Activated B cell treated with CpG ODN at 0.5 μM for 24 hours (primary cell): ENCODE measurements at regions of chr3 and their contacts with region 1.

Region 1: GRCh38 chr3:33717866-33718594 is at the start of gene CLASP2:
- DNase-seq: peak; percentile 89
- ATAC-seq: peak; percentile 90
- H3K4me3 Mint-ChIP-seq: peak within 1 kb of the TSS; percentile 96
- H3K27ac Mint-ChIP-seq: peak within 1 kb of the TSS; percentile 98
- H3K4me1 Mint-ChIP-seq: peaks cover 12% of the 10 kb centered on the region
- H3K27me3 Mint-ChIP-seq: no peaks in the 10 kb centered on the region
- CTCF ChIP-seq: no peak
- total RNA-seq, gene CLASP2: 73.3 and 85.8 TPM in 2 replicates

Region 2: GRCh38 chr3:33113772-33114621 is 604.0 kb before region 1 on chr3 and contains the start of gene CRTAP:
- CTCF ChIA-PET with region 1: no interaction called
- POLR2A ChIA-PET with region 1: no interaction called
- intact Hi-C with region 1: loop called (anchors 5 kb)
- DNase-seq: peak; percentile 91
- ATAC-seq: peak; percentile 83
- H3K4me3 Mint-ChIP-seq: peak within 1 kb of the TSS; percentile 87
- H3K27ac Mint-ChIP-seq: peak within 1 kb of the TSS; percentile 85
- H3K4me1 Mint-ChIP-seq: peaks cover 50% of the 10 kb centered on the region
- H3K27me3 Mint-ChIP-seq: no peaks in the 10 kb centered on the region
- CTCF ChIP-seq: no peak
- total RNA-seq, gene CRTAP: 36.5 and 36.6 TPM in 2 replicates

Region 3: DNA sequence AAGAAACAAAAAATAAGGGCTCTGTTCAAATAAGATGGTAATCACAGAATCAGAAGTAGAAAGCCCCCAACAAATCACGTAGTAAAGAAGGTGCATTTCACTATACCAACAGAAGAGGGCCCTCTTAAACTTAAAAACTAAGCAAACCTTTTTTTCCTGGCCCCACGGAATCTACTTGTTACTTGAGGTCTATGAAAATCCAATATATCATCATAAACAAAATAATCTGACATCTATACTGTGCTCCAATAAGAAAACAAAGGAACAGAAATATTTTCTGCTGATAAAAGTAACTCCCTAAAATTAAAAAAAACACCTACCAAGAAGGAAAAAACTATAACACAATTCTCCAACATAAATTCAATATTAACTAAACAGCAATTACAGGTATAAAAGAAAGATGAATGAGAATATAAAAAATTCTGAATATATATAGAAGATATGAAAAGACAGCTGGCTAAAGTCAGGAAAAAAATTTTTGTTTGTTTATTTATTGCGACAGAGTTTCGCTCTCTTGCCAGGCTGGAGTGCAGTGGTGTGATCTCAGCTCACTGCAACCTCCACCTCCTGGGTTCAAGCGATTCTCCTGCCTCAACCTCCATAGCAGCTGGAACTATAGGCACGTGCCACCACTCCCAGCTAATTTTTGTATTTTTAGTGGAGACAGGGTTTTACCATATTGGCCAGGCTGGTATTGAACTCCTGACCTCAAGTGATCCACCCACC is 81.7 kb before region 1 on chr3:
- CTCF ChIA-PET with region 1: no interaction called
- POLR2A ChIA-PET with region 1: no interaction called
- intact Hi-C with region 1: loop called (anchors 2 kb)
- DNase-seq: no peak
- ATAC-seq: no peak
- H3K4me3 Mint-ChIP-seq: no peak overlapping the region
- H3K27ac Mint-ChIP-seq: no peak overlapping the region
- H3K4me1 Mint-ChIP-seq: no peaks in the 10 kb centered on the region
- H3K27me3 Mint-ChIP-seq: no peaks in the 10 kb centered on the region
- CTCF ChIP-seq: peak; percentile 31

Region 4: DNA sequence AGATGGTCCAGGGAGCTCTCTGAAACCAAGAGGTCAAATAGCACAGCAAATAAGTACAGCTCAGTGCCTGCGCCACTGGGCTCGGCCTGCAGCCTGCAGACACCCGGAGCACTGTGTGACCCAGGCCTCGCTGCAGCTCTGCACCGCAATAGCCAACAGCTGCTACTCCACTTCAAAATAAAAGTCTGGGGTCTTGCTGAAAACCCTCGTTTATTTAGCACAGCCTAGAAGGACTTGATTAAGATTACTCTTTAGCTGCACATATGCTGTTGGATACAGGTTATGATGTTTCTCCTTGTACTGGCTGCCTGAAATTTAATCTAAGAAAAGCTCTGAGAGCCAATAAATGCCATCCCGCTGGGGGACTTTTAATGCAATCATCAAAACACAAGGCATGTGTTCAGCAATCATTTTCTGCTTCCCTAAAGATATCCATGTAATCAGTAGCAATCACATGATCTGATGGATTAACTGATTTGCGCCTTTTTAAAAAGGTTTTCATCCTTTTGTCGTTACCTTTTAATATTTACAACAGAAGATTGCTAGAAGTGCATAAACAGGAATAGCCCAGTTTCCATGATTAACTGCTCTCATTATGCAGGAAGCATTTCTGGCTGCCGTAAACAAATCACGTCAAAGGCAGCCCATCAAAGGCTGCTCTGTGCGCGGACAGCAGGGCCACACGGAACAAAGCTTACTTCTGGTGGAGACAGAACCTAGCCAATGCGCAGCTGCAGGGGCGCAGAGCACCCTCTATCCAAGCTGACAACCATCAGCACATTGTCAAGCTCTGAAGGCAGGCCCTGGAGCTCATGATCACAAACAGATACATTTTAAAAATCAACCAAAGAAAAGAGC is 58.8 kb before region 1 on chr3:
- CTCF ChIA-PET with region 1: no interaction called
- POLR2A ChIA-PET with region 1: no interaction called
- intact Hi-C with region 1: loop called (anchors 5 kb)
- DNase-seq: no peak
- ATAC-seq: peak; percentile 83
- H3K4me3 Mint-ChIP-seq: peak overlapping the region; percentile 74
- H3K27ac Mint-ChIP-seq: peak overlapping the region; percentile 47
- H3K4me1 Mint-ChIP-seq: peaks cover 28% of the 10 kb centered on the region
- H3K27me3 Mint-ChIP-seq: no peaks in the 10 kb centered on the region
- CTCF ChIP-seq: no peak

Region 5: GRCh38 chr3:33704891-33705290 is 13.1 kb before region 1 on chr3:
- CTCF ChIA-PET with region 1: no interaction called
- POLR2A ChIA-PET with region 1: no interaction called
- intact Hi-C with region 1: loop called (anchors 2 kb)
- DNase-seq: no peak
- ATAC-seq: no peak
- H3K4me3 Mint-ChIP-seq: no peak overlapping the region
- H3K27ac Mint-ChIP-seq: no peak overlapping the region
- H3K4me1 Mint-ChIP-seq: peaks cover 21% of the 10 kb centered on the region
- H3K27me3 Mint-ChIP-seq: no peaks in the 10 kb centered on the region
- CTCF ChIP-seq: no peak

Region 6: DNA sequence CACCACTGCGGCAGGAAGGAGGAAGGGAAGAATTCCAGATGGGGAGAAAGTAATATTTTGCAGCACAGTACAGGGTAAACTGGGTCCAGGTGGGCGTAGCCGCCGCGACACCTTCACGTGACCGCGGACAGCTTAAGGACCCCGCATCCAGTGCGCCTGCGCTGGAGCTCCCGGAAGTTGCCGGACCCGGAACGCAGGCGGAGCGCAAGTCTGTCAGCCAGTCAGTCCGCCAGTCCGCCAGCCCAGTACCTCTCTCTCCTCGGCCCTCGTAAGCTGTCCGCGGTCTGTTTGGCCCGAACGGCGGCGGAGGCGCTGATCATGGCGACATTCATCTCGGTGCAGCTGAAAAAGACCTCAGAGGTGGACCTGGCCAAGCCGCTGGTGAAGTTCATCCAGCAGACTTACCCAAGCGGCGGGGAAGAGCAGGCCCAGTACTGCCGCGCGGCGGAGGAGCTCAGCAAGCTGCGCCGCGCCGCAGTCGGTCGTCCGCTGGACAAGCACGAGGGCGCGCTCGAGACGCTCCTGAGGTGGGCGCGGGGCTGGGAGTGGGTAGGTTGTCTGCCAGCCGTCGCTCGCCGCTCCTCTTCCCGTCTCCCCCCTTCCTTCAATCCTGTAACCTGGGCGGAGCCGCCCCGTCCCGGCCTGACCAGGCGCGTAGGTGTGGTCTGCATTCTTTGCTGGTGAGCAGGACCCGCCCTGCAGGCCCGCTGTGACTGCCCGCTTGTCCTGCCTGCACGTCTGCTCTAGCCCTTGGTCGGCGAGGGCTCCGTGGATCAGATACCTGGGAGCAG is 80.6 kb after region 1 on chr3 and contains the start of gene PDCD6IP:
- CTCF ChIA-PET with region 1: no interaction called
- POLR2A ChIA-PET with region 1: interaction called, 14 read pairs
- intact Hi-C with region 1: loop called (anchors 1 kb)
- DNase-seq: peak; percentile 93
- ATAC-seq: peak; percentile 84
- H3K4me3 Mint-ChIP-seq: peak within 1 kb of the TSS; percentile 99
- H3K27ac Mint-ChIP-seq: peak within 1 kb of the TSS; percentile 95
- H3K4me1 Mint-ChIP-seq: peaks cover 52% of the 10 kb centered on the region
- H3K27me3 Mint-ChIP-seq: no peaks in the 10 kb centered on the region
- CTCF ChIP-seq: no peak
- total RNA-seq, gene PDCD6IP: 216 and 237 TPM in 2 replicates

Region 7: DNA sequence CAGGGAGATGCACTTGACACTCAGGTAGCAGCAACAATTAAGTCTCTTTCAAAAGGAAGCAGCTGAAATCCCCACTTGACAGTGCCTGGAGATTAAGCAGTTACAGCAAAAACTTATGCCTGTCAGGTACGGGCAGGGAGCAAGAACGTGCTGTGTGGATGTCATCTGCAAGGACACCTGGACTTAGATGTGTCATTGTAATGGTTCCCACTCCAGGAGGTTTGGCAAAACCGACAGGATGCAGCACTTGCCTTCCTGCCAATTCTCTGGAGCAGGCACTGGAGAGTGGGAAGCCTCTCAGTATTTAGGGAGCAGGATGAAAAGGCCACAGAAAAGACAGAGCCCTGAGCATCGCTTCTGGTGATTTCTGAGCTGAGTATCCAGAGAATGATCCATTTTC is 372.8 kb after region 1 on chr3:
- CTCF ChIA-PET with region 1: no interaction called
- POLR2A ChIA-PET with region 1: no interaction called
- intact Hi-C with region 1: no loop called
- DNase-seq: no peak
- ATAC-seq: no peak
- H3K4me3 Mint-ChIP-seq: no peak overlapping the region
- H3K27ac Mint-ChIP-seq: no peak overlapping the region
- H3K4me1 Mint-ChIP-seq: no peaks in the 10 kb centered on the region
- H3K27me3 Mint-ChIP-seq: peaks cover 3% of the 10 kb centered on the region
- CTCF ChIP-seq: no peak